T-cell (primary cell): ENCODE measurements at regions of chr2 and their contacts with region 1.

Region 1: DNA sequence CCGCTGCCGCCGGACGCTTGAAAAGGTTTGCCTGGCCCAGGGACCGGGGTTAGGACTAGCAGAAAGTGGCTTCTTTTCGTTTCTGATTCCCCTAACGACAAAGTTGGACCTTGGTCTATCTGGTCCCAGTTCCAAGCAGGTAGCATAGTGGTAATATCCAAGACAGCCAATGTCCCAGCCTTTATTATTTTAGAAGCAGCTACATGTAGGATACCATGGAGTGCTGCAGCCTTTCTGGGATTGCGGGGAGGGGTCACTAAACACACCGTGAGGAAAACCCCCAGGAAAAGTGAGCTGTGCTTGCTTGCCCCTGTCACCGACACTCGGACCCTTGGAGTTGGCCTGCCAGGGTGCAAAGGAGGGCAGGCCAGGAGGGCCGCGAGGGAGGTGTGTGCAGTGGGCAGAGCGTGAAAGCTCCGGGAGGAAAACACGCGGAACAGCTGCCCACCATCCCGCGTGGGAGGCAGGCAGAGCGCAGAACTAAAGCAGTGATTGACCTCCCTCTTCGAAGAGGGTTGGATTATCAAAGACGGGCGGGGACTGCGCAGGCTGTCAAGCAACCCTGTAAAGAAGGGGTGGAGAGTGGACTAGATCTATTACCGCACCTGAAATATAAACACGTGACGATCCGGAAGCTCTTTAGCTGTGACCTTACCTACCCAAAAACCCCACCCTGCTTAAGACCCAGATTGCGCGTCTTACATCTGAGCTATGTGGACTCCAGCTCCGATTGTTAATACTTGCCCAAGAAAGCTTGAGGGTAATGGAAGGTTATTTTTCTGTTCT is 619 bp upstream of the MAP4K3 start:
- DNase-seq: peak; percentile 6 to 65 (median 36)
- ATAC-seq: peak; percentile 49 to 82 (median 61)
- H3K4me3 ChIP-seq: peak overlapping the region; percentile 73 to 96
- H3K4me3 Mint-ChIP-seq: peak overlapping the region; percentile 80 to 91 (median 90)
- H3K27ac ChIP-seq: peak overlapping the region; percentile 37
- H3K27ac Mint-ChIP-seq: peak overlapping the region; percentile 44 to 68
- H3K4me1 ChIP-seq: peaks cover 17 to 19% of the 10 kb centered on the region in 2 experiments
- H3K4me1 Mint-ChIP-seq: peaks cover 47 to 52% (median 51%) of the 10 kb centered on the region in 3 donors
- H3K27me3 ChIP-seq: no peaks in the 10 kb centered on the region
- H3K27me3 Mint-ChIP-seq: no peaks in the 10 kb centered on the region

Region 2: GRCh38 chr2:38301340-38301968 is 1136.2 kb before region 1 on chr2:
- CTCF ChIA-PET with region 1: no interaction called
- POLR2A ChIA-PET with region 1: no interaction called
- DNase-seq: no peak
- ATAC-seq: no peak
- H3K4me3 ChIP-seq: no peak overlapping the region
- H3K4me3 Mint-ChIP-seq: no peak overlapping the region
- H3K27ac ChIP-seq: no peak overlapping the region
- H3K27ac Mint-ChIP-seq: peak overlapping the region in 1 of 2 donors; percentile 66
- H3K4me1 ChIP-seq: peaks cover 5 to 10% of the 10 kb centered on the region in 2 experiments
- H3K4me1 Mint-ChIP-seq: peaks cover 40 to 56% (median 40%) of the 10 kb centered on the region in 3 donors
- H3K27me3 ChIP-seq: no peaks in the 10 kb centered on the region
- H3K27me3 Mint-ChIP-seq: no peaks in the 10 kb centered on the region

Region 3: GRCh38 chr2:39416140-39416539 is 21.6 kb before region 1 on chr2:
- CTCF ChIA-PET with region 1: no interaction called
- POLR2A ChIA-PET with region 1: no interaction called
- DNase-seq: no peak
- ATAC-seq: no peak
- H3K4me3 ChIP-seq: no peak overlapping the region
- H3K4me3 Mint-ChIP-seq: no peak overlapping the region
- H3K27ac ChIP-seq: no peak overlapping the region
- H3K27ac Mint-ChIP-seq: no peak overlapping the region
- H3K4me1 ChIP-seq: no peaks in the 10 kb centered on the region
- H3K4me1 Mint-ChIP-seq: peaks cover 37 to 45% (median 44%) of the 10 kb centered on the region in 3 donors
- H3K27me3 ChIP-seq: no peaks in the 10 kb centered on the region
- H3K27me3 Mint-ChIP-seq: no peaks in the 10 kb centered on the region

Region 4: GRCh38 chr2:39558906-39559305 is 121.2 kb after region 1 on chr2:
- CTCF ChIA-PET with region 1: interaction called in 1 of 2 experiments, 10 read pairs
- POLR2A ChIA-PET with region 1: no interaction called
- DNase-seq: no peak
- ATAC-seq: no peak
- H3K4me3 ChIP-seq: no peak overlapping the region
- H3K4me3 Mint-ChIP-seq: no peak overlapping the region
- H3K27ac ChIP-seq: no peak overlapping the region
- H3K27ac Mint-ChIP-seq: no peak overlapping the region
- H3K4me1 ChIP-seq: no peaks in the 10 kb centered on the region
- H3K4me1 Mint-ChIP-seq: no peaks in the 10 kb centered on the region
- H3K27me3 ChIP-seq: no peaks in the 10 kb centered on the region
- H3K27me3 Mint-ChIP-seq: no peaks in the 10 kb centered on the region